Right ventricle myocardium superior (tissue), 1 donor: ENCODE measurements at regions of chr15 and their contacts with region 1.

Region 1: DNA sequence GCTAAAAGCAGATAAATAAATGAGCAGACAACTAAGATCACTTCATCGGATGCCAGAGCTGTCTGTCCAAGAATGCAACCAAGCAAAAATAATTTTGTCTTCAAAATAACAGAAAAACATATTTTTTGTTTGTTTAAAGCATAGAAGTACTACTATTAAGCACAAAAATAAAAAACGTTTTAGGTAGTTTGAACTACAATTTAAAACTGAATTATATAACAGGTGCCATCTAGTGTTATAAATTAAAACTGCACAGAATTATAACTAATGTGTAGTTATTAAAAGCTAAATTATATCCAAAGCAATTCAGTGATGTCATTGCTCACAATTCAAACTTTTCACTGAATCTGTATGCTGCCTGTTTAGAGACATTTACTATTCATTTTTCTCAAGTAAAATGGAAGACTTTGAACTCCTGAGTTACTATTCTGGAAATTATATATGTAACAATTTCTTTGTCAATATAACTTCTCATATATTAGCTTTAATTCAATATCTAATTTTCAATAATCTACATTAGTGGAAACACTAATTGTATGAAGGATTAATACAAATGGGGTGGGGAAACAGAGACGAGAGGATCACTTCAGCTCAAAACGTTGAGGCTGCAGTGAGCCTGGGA is 29.5 kb downstream of the LINS1 start:
- DNase-seq: no peak
- ATAC-seq: no peak

Region 2: GRCh38 chr15:100349696-100350433 is 222.6 kb before region 1 on chr15:
- intact Hi-C with region 1: loop called (anchors 5 kb)
- DNase-seq: peak; percentile 96
- ATAC-seq: peak; percentile 98